IMR-90 (cell line): ENCODE measurements at regions of chr1 and their contacts with region 1.

Region 1: GRCh38 chr1:204207136-204207616 is 6.6 kb downstream of the GOLT1A start:
- DNase-seq: no peak
- ATAC-seq: peak; percentile 97
- H3K4me3 ChIP-seq: no peak overlapping the region
- H3K27ac ChIP-seq: no peak overlapping the region
- H3K4me1 ChIP-seq: peaks cover 3% of the 10 kb centered on the region; the same call in 1 of the 2 replicates
- H3K27me3 ChIP-seq: no peaks in the 10 kb centered on the region; the same call in 1 of the 2 replicates
- CTCF ChIP-seq: peak; percentile 82
- POLR2A ChIP-seq: no peak
- RAD21 ChIP-seq: peak; percentile 68

Region 2: GRCh38 chr1:203861379-203862184 is 345.6 kb before region 1 on chr1 and contains the start of gene SNRPE:
- CTCF ChIA-PET with region 1: no interaction called
- POLR2A ChIA-PET with region 1: no interaction called
- dilution Hi-C with region 1: no loop called
- in situ Hi-C with region 1: no loop called
- intact Hi-C with region 1: loop called (anchors 2 kb)
- DNase-seq: peak; percentile 98
- ATAC-seq: peak; percentile 96
- H3K4me3 ChIP-seq: peak within 1 kb of the TSS; percentile 75
- H3K27ac ChIP-seq: peak within 1 kb of the TSS; percentile 92
- H3K4me1 ChIP-seq: peaks cover 8% of the 10 kb centered on the region; the same call in 1 of the 2 replicates
- H3K27me3 ChIP-seq: no peaks in the 10 kb centered on the region
- CTCF ChIP-seq: peak; percentile 90
- POLR2A ChIP-seq: peak; percentile 84
- RAD21 ChIP-seq: peak; percentile 95
- total RNA-seq, gene SNRPE: 43.6 and 118 TPM in 2 replicates

Region 3: DNA sequence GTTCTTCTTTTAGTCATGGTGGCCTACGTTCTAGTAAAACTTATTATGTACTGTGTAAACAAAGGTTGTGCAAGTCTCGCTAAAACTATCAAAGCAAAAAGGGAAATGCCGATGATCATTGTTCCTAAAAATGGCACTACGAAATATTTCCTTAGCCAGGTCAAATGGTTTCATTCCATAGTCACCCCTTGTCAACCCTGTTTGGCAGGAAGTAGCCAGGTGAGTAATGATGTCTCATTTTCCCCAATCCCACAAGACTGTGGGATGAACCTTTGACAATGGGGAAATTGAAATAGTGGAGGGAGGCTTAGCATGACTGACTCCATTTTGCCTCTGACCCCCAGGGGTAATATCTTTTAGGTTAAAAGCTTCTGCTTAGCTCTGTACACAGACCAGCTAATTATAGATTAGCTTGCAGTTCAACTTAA is 35.4 kb before region 1 on chr1:
- CTCF ChIA-PET with region 1: interaction called, 25 read pairs
- POLR2A ChIA-PET with region 1: no interaction called
- dilution Hi-C with region 1: no loop called
- in situ Hi-C with region 1: loop called (anchors 5 kb)
- intact Hi-C with region 1: no loop called
- DNase-seq: peak; percentile 86
- ATAC-seq: no peak; the same call in none of the 2 replicates
- H3K4me3 ChIP-seq: no peak overlapping the region
- H3K27ac ChIP-seq: no peak overlapping the region
- H3K4me1 ChIP-seq: peaks cover 4% of the 10 kb centered on the region; the same call in 1 of the 2 replicates
- H3K27me3 ChIP-seq: no peaks in the 10 kb centered on the region
- CTCF ChIP-seq: no peak
- POLR2A ChIP-seq: no peak
- RAD21 ChIP-seq: no peak